ENCODE measurements at regions of chr10 and their contacts with region 1.

Region 1: DNA sequence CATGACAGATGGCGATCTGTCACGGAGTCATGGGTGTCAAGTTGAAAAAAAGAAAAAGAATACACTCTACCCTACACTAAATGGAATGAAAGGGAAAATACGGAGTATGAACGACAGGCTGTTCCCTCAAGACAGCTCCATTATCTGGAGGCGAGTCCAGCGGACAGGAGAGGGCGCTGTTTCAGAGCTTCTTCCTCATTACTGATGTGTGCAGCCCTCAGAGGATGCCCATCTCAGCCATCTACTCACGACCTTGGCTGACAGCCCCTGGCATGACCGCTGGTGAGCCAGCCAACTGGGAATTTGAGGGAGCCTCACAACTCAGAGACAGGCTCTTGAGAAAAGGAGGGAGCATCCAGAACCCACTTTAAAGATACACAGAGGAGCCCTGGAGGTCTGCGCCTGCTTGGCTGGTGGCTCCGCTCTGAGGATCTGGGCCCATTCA is 49.6 kb upstream of the SMNDC1 start:
- DNase-seq: no peak
- H3K4me3 ChIP-seq: no peak overlapping the region
- H3K27me3 ChIP-seq: no peaks in the 10 kb centered on the region
- CTCF ChIP-seq: peak; percentile 74

Region 2: GRCh38 chr10:110335314-110336064 is 18.9 kb before region 1 on chr10:
- CTCF ChIA-PET with region 1: interaction called, 20 read pairs
- POLR2A ChIA-PET with region 1: interaction called, 5 read pairs
- DNase-seq: no peak
- H3K4me3 ChIP-seq: no peak overlapping the region
- H3K27me3 ChIP-seq: no peaks in the 10 kb centered on the region
- CTCF ChIP-seq: no peak

Region 3: GRCh38 chr10:110368002-110368401 is 13.7 kb after region 1 on chr10:
- CTCF ChIA-PET with region 1: interaction called, 17 read pairs
- POLR2A ChIA-PET with region 1: no interaction called
- DNase-seq: no peak
- H3K4me3 ChIP-seq: no peak overlapping the region
- H3K27me3 ChIP-seq: no peaks in the 10 kb centered on the region
- CTCF ChIP-seq: no peak

Region 4: GRCh38 chr10:110497438-110498086 is 143.2 kb after region 1 on chr10 and contains the start of gene DUSP5:
- CTCF ChIA-PET with region 1: interaction called, 72 read pairs
- POLR2A ChIA-PET with region 1: interaction called, 5 read pairs
- DNase-seq: no peak
- H3K4me3 ChIP-seq: peak within 1 kb of the TSS; percentile 71
- H3K27me3 ChIP-seq: no peaks in the 10 kb centered on the region
- CTCF ChIP-seq: no peak
- polyA plus RNA-seq, gene DUSP5: 30.3 and 30.4 TPM in 2 replicates

Region 5: GRCh38 chr10:110502851-110503301 is 148.5 kb after region 1 on chr10:
- CTCF ChIA-PET with region 1: interaction called, 72 read pairs
- POLR2A ChIA-PET with region 1: interaction called, 16 read pairs
- DNase-seq: no peak
- H3K4me3 ChIP-seq: no peak overlapping the region
- H3K27me3 ChIP-seq: no peaks in the 10 kb centered on the region
- CTCF ChIP-seq: no peak

Region 6: GRCh38 chr10:110512461-110513187 is 158.3 kb after region 1 on chr10:
- CTCF ChIA-PET with region 1: interaction called, 21 read pairs
- POLR2A ChIA-PET with region 1: no interaction called
- DNase-seq: no peak
- H3K4me3 ChIP-seq: no peak overlapping the region
- H3K27me3 ChIP-seq: no peaks in the 10 kb centered on the region
- CTCF ChIP-seq: no peak

Region 7: DNA sequence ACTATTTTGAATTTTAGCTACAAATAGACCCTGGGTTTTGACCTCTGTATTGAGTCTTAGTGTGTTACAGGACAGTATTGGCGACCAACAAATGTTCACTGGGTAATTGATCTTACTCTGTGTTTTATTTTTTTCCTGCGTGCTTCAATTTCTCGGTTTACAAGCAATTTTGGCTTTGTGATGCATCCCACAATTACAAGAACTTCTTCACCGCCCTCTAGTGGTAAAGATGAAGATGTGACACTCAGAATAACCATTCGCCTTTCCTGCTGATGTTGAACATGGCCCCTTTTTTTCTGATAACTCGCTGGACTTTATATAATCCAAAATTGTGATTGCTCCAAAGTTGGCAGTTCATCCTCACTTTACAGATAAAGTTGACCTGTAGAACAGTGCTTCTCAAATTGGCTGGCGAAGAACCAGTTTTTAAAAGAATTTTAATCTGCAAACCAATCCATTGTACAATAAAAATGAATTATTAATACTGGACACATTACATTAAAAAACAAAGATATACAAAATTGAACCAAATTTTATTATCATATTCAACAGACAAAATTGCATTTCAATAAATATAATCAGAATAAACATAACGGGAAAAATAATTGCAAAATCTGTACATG is 192.9 kb after region 1 on chr10:
- CTCF ChIA-PET with region 1: interaction called, 38 read pairs
- POLR2A ChIA-PET with region 1: no interaction called
- DNase-seq: no peak
- H3K4me3 ChIP-seq: no peak overlapping the region
- H3K27me3 ChIP-seq: peaks cover 2% of the 10 kb centered on the region; the same call in 1 of the 2 replicates
- CTCF ChIP-seq: peak; percentile 74

Region 8: DNA sequence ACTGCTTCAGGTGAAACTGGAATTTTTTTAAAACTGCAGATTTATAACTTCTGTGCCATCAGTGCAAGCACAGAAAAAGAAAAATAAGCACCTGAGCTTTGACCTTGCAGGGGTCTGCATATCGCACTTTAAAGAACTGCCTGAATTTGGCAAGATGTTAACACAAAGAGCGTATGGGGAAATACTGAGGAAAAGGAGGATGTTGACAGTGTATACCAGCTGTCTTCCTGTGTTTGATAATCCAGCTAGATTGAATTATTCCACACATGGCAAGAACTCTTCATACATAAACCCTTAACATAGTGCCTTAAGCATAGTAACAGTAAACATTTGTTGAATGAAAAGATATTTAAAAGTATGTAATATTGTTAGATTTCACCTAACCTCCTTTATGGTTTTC is 243.1 kb after region 1 on chr10:
- CTCF ChIA-PET with region 1: no interaction called
- POLR2A ChIA-PET with region 1: no interaction called
- DNase-seq: no peak
- H3K4me3 ChIP-seq: no peak overlapping the region
- H3K27me3 ChIP-seq: no peaks in the 10 kb centered on the region
- CTCF ChIP-seq: no peak

Region 9: GRCh38 chr10:110681023-110681681 is 326.8 kb after region 1 on chr10:
- CTCF ChIA-PET with region 1: no interaction called
- POLR2A ChIA-PET with region 1: no interaction called
- DNase-seq: no peak
- H3K4me3 ChIP-seq: no peak overlapping the region
- H3K27me3 ChIP-seq: peaks cover 14% of the 10 kb centered on the region
- CTCF ChIP-seq: peak; percentile 65

Measured in BJ (cell line).